ENCODE measurements at regions of chr5 and their contacts with region 1.

Region 1: DNA sequence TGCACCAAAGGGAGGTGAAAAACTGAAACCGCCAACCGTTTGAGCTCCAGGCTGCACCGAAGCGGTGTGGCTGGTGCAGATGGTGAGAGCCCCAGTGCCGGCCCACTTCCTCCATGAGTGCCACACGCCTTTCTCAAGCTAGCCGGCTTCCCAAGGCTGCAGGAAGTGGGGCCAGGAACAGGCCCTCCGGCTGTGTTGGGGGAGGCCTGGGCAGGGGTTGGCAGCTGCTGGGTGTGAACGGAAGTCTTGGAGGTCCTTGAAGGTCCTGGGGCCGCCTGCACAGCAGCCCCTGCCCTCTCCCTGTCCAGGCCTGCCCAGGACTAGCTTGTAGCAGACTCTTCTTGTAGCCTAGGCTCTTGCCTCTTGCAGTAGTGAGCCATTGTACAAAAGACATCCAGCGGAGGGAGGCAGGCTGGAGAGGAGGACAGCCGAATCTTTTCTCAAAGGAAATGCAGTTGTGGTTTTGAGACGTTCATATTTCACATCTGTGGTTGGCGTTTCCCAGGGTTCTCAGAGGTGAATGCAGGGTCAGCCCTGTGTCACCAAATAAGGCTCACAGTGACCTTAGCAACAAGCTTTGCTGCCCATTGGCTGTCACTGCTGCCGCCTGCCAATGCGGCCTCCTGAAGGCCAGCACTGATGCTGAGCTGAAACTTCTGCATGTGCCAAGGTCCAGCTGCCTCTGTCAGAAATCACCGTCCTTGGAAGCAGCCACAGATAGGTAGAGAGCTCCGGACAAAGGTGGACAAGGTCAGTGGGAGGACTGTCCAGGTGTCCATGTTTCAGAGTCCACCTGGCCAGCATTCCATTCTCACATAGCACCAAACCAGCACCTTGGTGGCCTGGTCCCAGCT is 23.9 kb downstream of the IRF1 start:
- DNase-seq: peak; percentile 94
- ATAC-seq: peak; percentile 83
- H3K4me3 ChIP-seq: peak overlapping the region; percentile 42; the same call in 1 of the 2 replicates
- H3K27ac ChIP-seq: peak overlapping the region; percentile 96
- H3K4me1 ChIP-seq: peaks cover 60% of the 10 kb centered on the region
- H3K27me3 ChIP-seq: no peaks in the 10 kb centered on the region
- CTCF ChIP-seq: no peak
- EP300 ChIP-seq: peak; percentile 48 to 78; a peak in 3 of 4 replicates
- POLR2A ChIP-seq: no peak
- RAD21 ChIP-seq: peak; percentile 33

Region 2: DNA sequence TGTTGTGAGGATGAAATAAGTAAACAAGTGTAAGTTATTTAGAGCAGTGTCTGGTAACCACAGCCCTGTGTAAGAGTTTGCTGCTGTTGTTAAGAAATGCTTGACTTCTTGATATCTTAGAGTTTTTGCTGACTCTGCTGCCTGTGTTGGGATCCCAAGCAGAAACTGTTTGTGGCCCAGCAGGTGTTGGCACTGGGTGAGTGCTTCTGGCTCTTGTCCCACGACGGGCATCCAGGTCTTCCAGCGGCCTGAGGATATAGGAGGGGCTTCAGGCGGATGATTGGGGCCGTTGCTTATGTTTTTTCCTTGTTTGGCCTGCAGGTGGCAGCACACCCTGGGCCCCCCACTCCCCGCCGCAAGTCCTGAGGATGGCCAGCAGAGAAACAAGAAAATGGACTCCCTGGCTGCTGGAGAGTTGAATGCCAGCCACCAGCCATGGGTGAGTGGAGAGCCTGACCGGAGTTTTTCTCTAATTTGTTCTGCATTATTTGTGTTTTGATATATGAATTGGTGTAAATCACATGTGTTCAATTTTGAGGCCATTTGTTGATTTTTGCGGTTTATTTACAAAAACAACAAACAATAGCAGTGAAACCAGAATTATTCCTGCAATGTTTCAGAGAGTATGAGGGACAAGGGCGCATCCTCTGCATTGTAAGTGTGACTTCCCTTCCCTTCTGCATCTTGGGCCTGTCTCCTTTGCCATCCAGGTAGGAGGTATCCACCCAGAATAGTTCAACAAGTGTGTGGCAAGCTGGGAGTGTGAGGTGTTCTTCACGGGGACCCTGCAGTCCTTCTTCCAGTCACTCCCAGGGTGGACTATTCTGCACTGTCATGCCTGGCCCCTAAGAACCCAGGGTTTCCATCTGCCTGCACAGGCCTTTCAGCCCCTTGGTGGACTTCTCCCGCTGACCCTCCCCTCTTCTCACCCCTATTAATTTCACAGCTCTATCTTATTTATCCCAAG is 46.9 kb before region 1 on chr5:
- CTCF ChIA-PET with region 1: interaction called, 139 read pairs
- POLR2A ChIA-PET with region 1: interaction called, 92 read pairs
- RAD21 ChIA-PET with region 1: interaction called, 146 read pairs
- SMC1A ChIA-PET with region 1: interaction called, 300 read pairs
- in situ Hi-C with region 1: loop called (anchors 5 kb)
- intact Hi-C with region 1: loop called (anchors 1 kb)
- DNase-seq: no peak
- ATAC-seq: peak; percentile 50
- H3K4me3 ChIP-seq: peak overlapping the region; percentile 31; the same call in 1 of the 2 replicates
- H3K27ac ChIP-seq: peak overlapping the region; percentile 94
- H3K4me1 ChIP-seq: peaks cover 79% of the 10 kb centered on the region
- H3K27me3 ChIP-seq: no peaks in the 10 kb centered on the region
- CTCF ChIP-seq: peak; percentile 74 to 81 (median 80)
- EP300 ChIP-seq: no peak
- POLR2A ChIP-seq: no peak
- RAD21 ChIP-seq: peak; percentile 78

Region 3: GRCh38 chr5:132437604-132438266 is 28.9 kb before region 1 on chr5:
- CTCF ChIA-PET with region 1: interaction called, 7 read pairs
- POLR2A ChIA-PET with region 1: interaction called, 20 read pairs
- RAD21 ChIA-PET with region 1: interaction called, 29 read pairs
- SMC1A ChIA-PET with region 1: interaction called, 300 read pairs
- in situ Hi-C with region 1: no loop called
- intact Hi-C with region 1: no loop called
- DNase-seq: no peak
- ATAC-seq: peak; percentile 91
- H3K4me3 ChIP-seq: peak overlapping the region; percentile 18; the same call in 1 of the 2 replicates
- H3K27ac ChIP-seq: peak overlapping the region; percentile 62
- H3K4me1 ChIP-seq: peaks cover 28% of the 10 kb centered on the region
- H3K27me3 ChIP-seq: no peaks in the 10 kb centered on the region
- CTCF ChIP-seq: no peak
- EP300 ChIP-seq: no peak
- POLR2A ChIP-seq: peak; percentile 36; the same call in 1 of the 2 replicates
- RAD21 ChIP-seq: peak; percentile 19; the same call in 1 of the 2 replicates

Region 4: GRCh38 chr5:132456296-132457001 is 10.2 kb before region 1 on chr5:
- CTCF ChIA-PET with region 1: interaction called, 16 read pairs
- POLR2A ChIA-PET with region 1: interaction called, 79 read pairs
- RAD21 ChIA-PET with region 1: interaction called, 69 read pairs
- SMC1A ChIA-PET with region 1: interaction called, 131 read pairs
- in situ Hi-C with region 1: no loop called
- intact Hi-C with region 1: loop called (anchors 1 kb)
- DNase-seq: peak; percentile 73
- ATAC-seq: peak; percentile 78
- H3K4me3 ChIP-seq: peak overlapping the region; percentile 2; the same call in 1 of the 2 replicates
- H3K27ac ChIP-seq: peak overlapping the region; percentile 89
- H3K4me1 ChIP-seq: peaks cover 63% of the 10 kb centered on the region
- H3K27me3 ChIP-seq: no peaks in the 10 kb centered on the region
- CTCF ChIP-seq: no peak
- EP300 ChIP-seq: peak in 1 of 2 experiments; percentile 23; a peak in 1 of 4 replicates
- POLR2A ChIP-seq: no peak
- RAD21 ChIP-seq: no peak

Region 5: GRCh38 chr5:132490486-132491367 is 24.1 kb after region 1 on chr5 and contains the start of gene IRF1:
- CTCF ChIA-PET with region 1: interaction called, 51 read pairs
- POLR2A ChIA-PET with region 1: interaction called, 178 read pairs
- RAD21 ChIA-PET with region 1: interaction called, 64 read pairs
- SMC1A ChIA-PET with region 1: interaction called, 47 read pairs
- in situ Hi-C with region 1: no loop called
- intact Hi-C with region 1: loop called (anchors 1 kb)
- DNase-seq: no peak
- ATAC-seq: peak; percentile 80
- H3K4me3 ChIP-seq: peak within 1 kb of the TSS; percentile 98
- H3K27ac ChIP-seq: peak within 1 kb of the TSS; percentile 97
- H3K4me1 ChIP-seq: peaks cover 52% of the 10 kb centered on the region
- H3K27me3 ChIP-seq: no peaks in the 10 kb centered on the region
- CTCF ChIP-seq: 0 out of 6 replicates have a peak, but pooled peaks of 2 of the 3 experiments have one; percentile 3 to 7
- EP300 ChIP-seq: 0 out of 4 replicates have a peak, but pooled peaks of 1 of the 2 experiments have one; percentile 1
- POLR2A ChIP-seq: peak; percentile 94
- RAD21 ChIP-seq: 0 out of 2 replicates have a peak, but pooled peaks have one; percentile 0
- polyA plus RNA-seq, gene IRF1: 6.9 to 14.0 TPM

Region 6: DNA sequence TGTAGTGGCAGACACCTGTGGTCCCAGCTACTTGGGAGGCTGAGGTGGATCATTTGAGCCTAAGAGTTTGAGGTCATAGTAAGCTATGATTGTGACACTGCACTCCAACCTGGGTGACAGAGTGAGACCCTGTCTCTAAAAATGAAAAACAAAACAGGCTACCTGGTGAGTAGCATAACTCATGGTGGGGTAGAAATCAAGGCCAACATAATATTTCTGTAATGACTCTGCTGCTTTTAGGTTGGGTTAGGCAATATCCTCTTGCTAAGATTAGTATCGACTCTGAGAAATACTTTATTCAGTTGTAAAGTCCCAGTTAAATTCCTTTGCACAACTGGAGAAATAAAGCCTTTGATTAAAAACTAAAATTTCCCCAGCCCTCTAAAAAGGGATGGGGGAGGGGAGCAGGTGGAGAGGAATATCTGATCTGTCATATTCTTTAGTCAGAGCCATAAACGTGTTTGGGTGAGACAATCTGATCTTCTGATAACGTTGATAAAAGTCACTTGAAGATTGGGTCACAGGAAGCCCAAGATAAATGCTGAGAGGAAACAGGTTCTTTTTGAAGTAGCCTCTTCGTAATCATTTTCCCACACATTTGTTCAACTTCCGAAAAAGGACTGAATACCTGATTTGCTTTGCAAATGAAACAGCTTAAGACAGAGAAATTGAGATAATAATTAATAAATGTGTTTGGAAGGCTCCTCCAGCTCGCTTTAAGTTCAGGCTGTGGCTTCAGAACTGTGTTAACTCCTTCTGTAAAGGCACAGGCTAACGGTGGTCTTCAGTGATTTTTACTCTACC is 222.1 kb after region 1 on chr5:
- CTCF ChIA-PET with region 1: no interaction called
- POLR2A ChIA-PET with region 1: no interaction called
- RAD21 ChIA-PET with region 1: no interaction called
- SMC1A ChIA-PET with region 1: no interaction called
- in situ Hi-C with region 1: no loop called
- intact Hi-C with region 1: no loop called
- DNase-seq: no peak
- ATAC-seq: peak; percentile 34
- H3K4me3 ChIP-seq: no peak overlapping the region
- H3K27ac ChIP-seq: no peak overlapping the region
- H3K4me1 ChIP-seq: peaks cover 18% of the 10 kb centered on the region; the same call in 1 of the 2 replicates
- H3K27me3 ChIP-seq: no peaks in the 10 kb centered on the region
- CTCF ChIP-seq: no peak
- EP300 ChIP-seq: no peak
- POLR2A ChIP-seq: no peak
- RAD21 ChIP-seq: no peak

Measured in GM12878 (cell line).